ENCODE measurements at regions of chr1 and their contacts with region 1.

Region 1: GRCh38 chr1:58249737-58250586 is 296.6 kb downstream of the OMA1 start:
- DNase-seq: peak; percentile 47 to 83
- H3K4me3 ChIP-seq: peak overlapping the region; percentile 63 to 77 (median 70)
- H3K27ac ChIP-seq: no peak overlapping the region
- H3K4me1 ChIP-seq: peaks cover 8 to 11% (median 10%) of the 10 kb centered on the region in 4 experiments; a peak in 6 of 7 replicates
- H3K27me3 ChIP-seq: peaks cover 2 to 20% (median 19%) of the 10 kb centered on the region in 4 experiments
- CTCF ChIP-seq: peak in 1 of 3 experiments; percentile 18; a peak in 1 of 4 replicates
- EP300 ChIP-seq: peak in 1 of 2 experiments; percentile 25; a peak in 1 of 3 replicates
- POLR2A ChIP-seq: no peak
- RAD21 ChIP-seq: peak; percentile 8 to 24; a peak in 3 of 4 replicates

Region 2: DNA sequence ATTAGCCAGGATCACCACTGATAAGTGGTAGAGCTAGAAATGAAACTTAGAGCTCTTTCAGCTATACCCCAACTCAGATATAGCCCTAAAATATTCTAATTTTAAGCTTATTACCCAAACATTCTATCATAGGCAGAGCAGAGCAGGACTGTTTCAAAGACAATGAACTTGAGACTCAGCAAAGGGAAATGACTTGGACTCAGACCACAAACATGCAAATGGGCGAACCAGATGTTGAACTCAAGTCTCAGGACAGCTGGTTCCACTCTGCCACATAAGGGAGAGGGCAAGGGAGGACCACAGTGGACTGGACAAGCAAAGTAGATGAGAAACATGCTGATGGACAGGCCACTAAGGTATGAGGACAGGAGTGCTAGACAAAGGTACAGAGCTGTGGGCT is 18.8 kb before region 1 on chr1:
- CTCF ChIA-PET with region 1: interaction called, 11 read pairs
- POLR2A ChIA-PET with region 1: no interaction called
- DNase-seq: no peak
- H3K4me3 ChIP-seq: no peak overlapping the region
- H3K27ac ChIP-seq: no peak overlapping the region
- H3K4me1 ChIP-seq: peaks cover 0 to 6% (median 4%) of the 10 kb centered on the region in 4 experiments; a peak in 5 of 7 replicates
- H3K27me3 ChIP-seq: no peaks in the 10 kb centered on the region
- CTCF ChIP-seq: no peak
- EP300 ChIP-seq: no peak
- POLR2A ChIP-seq: no peak
- RAD21 ChIP-seq: no peak

Region 3: DNA sequence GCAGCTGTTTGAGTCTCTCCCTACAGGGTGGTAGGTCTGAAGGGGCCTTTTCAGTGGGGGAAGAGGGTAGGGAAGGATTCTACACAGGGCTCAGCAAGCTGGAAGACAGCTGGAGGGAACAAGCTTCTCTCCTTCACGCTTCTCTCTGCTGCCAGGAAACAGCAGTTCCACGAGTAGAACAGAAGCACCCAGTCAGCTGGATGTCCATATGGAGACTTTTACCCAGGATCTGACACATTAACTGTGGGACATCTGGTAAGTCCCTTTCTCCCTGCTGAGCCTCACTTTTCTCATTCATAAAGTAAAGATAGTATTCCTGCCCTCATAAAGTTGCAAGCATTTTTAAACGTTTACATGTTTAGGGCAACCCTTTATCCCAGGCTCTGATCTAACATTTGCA is 16.3 kb after region 1 on chr1:
- CTCF ChIA-PET with region 1: interaction called, 42 read pairs
- POLR2A ChIA-PET with region 1: interaction called, 3 read pairs
- DNase-seq: no peak
- H3K4me3 ChIP-seq: no peak overlapping the region
- H3K27ac ChIP-seq: no peak overlapping the region
- H3K4me1 ChIP-seq: no peaks in the 10 kb centered on the region
- H3K27me3 ChIP-seq: no peaks in the 10 kb centered on the region
- CTCF ChIP-seq: no peak
- EP300 ChIP-seq: no peak
- POLR2A ChIP-seq: no peak
- RAD21 ChIP-seq: no peak

Region 4: GRCh38 chr1:58352476-58353092 is 102.6 kb after region 1 on chr1:
- CTCF ChIA-PET with region 1: no interaction called
- POLR2A ChIA-PET with region 1: no interaction called
- DNase-seq: no peak
- H3K4me3 ChIP-seq: no peak overlapping the region
- H3K27ac ChIP-seq: no peak overlapping the region
- H3K4me1 ChIP-seq: peaks cover 0 to 3% (median 0%) of the 10 kb centered on the region in 4 experiments; a peak in 2 of 7 replicates
- H3K27me3 ChIP-seq: no peaks in the 10 kb centered on the region
- CTCF ChIP-seq: peak in 1 of 3 experiments; percentile 8; a peak in 1 of 4 replicates
- EP300 ChIP-seq: no peak
- POLR2A ChIP-seq: no peak
- RAD21 ChIP-seq: peak in 1 of 2 experiments; percentile 33; a peak in 1 of 4 replicates